Psoas muscle (tissue), 8 donors: ENCODE measurements at regions of chr15 and their contacts with region 1.

Region 1: DNA sequence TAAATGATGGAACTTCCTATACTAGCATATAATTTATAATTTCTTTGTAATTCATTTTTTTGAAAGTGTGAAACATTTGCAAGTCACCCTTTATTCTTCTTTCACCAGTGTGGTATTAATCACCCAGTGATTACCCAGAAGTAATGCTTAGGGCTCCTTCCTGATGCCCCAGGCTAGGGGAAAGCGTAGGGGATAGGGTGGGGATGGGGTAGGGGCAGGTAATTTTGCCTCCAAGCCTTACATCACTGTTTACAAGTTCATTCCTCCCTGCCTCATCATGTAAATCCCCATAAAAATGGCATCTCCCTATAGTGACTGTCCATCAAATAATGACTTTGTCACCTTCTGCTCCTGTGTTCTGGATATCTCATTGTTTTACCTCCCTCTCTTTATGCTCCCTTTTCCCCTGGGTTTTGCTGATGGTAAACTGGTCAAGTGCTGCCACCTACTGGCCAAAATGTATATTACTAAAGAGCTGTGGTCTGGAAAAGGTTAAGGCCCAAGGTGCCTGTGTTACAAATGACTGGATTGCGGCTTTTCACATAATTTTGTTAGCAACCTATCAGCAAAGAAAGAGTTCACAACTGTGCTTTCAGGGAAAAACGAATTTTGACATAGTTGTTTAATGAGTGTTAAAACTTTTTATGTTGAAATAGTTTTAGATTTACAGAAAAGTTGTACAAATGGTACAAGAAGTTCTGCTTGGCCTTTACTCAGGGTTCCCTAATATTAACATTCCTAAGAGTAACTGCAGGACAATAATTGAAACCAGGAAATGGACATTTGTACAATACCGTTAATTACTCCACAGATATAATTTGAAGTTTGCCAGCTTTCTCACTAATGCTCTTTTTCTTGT is 54.7 kb downstream of the ONECUT1 start:
- DNase-seq: no peak
- ATAC-seq: peak; percentile 52 to 76 (median 62)
- H3K4me3 ChIP-seq: no peak overlapping the region
- H3K27ac ChIP-seq: no peak overlapping the region
- H3K4me1 ChIP-seq: peaks cover 35% of the 10 kb centered on the region
- H3K27me3 ChIP-seq: no peaks in the 10 kb centered on the region
- CTCF ChIP-seq: peak; percentile 91

Region 2: GRCh38 chr15:52256366-52256765 is 479.1 kb before region 1 on chr15:
- intact Hi-C with region 1: loop called (anchors 1 to 2 kb)
- DNase-seq: peak; percentile 55 to 75
- ATAC-seq: peak; percentile 52 to 66 (median 58)
- H3K4me3 ChIP-seq: peak overlapping the region; percentile 20
- H3K27ac ChIP-seq: no peak overlapping the region
- H3K4me1 ChIP-seq: peaks cover 16% of the 10 kb centered on the region
- H3K27me3 ChIP-seq: no peaks in the 10 kb centered on the region
- CTCF ChIP-seq: peak; percentile 70

Region 3: DNA sequence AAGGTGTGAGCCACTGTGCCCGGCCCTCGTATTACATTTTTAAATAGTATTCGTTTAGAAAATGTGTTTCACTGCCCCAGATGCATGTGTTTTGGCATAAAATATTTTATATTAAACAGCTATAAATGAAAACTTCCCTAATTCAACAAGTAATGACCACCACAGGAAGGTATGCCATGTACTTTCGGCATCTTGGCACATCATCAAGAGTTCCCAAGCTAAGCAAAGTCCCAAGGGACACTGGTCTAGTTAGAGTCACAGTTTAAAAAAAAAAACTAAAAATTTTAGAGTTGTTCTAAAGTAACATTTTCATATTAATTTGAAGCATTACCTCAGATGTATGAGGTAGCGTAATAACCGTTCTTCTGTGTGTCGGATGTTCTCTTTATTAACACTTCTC is 151.0 kb before region 1 on chr15:
- intact Hi-C with region 1: loop called in 1 of 2 experiments (anchors 10 kb)
- DNase-seq: no peak
- ATAC-seq: no peak
- H3K4me3 ChIP-seq: no peak overlapping the region
- H3K27ac ChIP-seq: no peak overlapping the region
- H3K4me1 ChIP-seq: no peaks in the 10 kb centered on the region
- H3K27me3 ChIP-seq: no peaks in the 10 kb centered on the region
- CTCF ChIP-seq: no peak

Region 4: DNA sequence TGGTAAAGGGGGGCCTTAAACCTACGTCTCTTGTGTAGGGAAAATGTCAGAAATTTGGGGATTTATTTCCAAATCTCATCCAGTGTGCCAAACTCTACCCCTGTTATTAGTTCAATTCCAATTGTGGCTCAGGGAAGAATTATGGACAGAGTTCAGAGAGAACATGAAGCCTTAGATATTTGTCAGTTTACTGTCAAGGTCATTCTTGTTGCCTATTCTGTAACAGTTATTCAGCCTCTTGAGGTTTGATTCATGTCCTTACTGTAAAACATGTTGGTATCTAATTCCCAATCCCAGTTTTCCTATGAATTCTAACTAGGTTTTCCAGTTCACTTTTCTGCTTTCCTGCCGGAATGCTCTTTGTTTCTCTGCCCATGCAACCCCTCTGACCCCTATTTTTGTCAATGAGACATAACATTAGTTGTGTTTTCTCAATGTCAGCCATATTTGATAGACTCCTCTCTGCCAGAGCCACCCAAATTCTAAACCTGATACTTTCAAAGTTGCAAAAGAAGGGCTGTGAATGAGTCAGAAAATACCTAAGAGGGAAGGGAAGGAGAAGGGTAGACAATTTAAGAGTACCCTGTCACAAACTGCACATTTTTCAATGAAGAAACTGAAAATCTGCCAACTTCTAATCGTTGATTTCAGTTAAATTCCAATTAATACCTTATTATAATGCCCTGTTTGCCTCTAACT is 108.6 kb before region 1 on chr15:
- intact Hi-C with region 1: loop called (anchors 5 to 10 kb)
- DNase-seq: no peak
- ATAC-seq: peak; percentile 65 to 80 (median 69)
- H3K4me3 ChIP-seq: no peak overlapping the region
- H3K27ac ChIP-seq: peak overlapping the region; percentile 60
- H3K4me1 ChIP-seq: peaks cover 37% of the 10 kb centered on the region
- H3K27me3 ChIP-seq: no peaks in the 10 kb centered on the region
- CTCF ChIP-seq: no peak

Region 5: GRCh38 chr15:52674831-52675230 is 60.6 kb before region 1 on chr15:
- intact Hi-C with region 1: no loop called
- DNase-seq: no peak
- ATAC-seq: no peak
- H3K4me3 ChIP-seq: peak overlapping the region; percentile 93
- H3K27ac ChIP-seq: peak overlapping the region; percentile 2
- H3K4me1 ChIP-seq: peaks cover 45% of the 10 kb centered on the region
- H3K27me3 ChIP-seq: no peaks in the 10 kb centered on the region
- CTCF ChIP-seq: no peak

Region 6: GRCh38 chr15:52805351-52806283 is 70.2 kb after region 1 on chr15:
- intact Hi-C with region 1: no loop called
- DNase-seq: peak in 1 of 2 donors; percentile 53
- ATAC-seq: peak; percentile 20 to 65 (median 42)
- H3K4me3 ChIP-seq: peak overlapping the region; percentile 61
- H3K27ac ChIP-seq: no peak overlapping the region
- H3K4me1 ChIP-seq: peaks cover 17% of the 10 kb centered on the region
- H3K27me3 ChIP-seq: peaks cover 7 to 99% (median 35%) of the 10 kb centered on the region in 3 donors
- CTCF ChIP-seq: no peak